RWPE1 (cell line): ENCODE measurements at regions of chr9 and their contacts with region 1.

Region 1: DNA sequence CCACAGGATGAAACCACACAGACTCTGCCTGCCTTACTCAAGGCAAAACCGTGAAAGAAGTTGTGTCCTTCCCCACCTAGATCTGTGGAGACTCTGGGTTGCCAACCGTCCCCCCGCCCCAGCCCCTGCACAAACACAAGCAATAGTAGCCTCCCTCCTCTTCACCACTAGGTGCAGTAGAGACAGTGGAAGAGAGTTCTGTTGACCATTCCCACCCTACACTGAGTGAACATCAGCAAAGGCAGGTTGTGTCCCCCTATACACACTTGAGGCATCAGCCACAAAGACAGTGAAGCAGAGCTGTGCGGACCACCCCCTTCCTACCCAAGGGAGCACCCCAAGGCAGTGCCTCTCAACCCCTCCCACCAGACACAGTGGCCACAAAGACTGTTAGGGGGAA is 223.7 kb upstream of the NFIL3 start:
- DNase-seq: no peak
- H3K27ac ChIP-seq: no peak overlapping the region
- CTCF ChIP-seq: no peak

Region 2: DNA sequence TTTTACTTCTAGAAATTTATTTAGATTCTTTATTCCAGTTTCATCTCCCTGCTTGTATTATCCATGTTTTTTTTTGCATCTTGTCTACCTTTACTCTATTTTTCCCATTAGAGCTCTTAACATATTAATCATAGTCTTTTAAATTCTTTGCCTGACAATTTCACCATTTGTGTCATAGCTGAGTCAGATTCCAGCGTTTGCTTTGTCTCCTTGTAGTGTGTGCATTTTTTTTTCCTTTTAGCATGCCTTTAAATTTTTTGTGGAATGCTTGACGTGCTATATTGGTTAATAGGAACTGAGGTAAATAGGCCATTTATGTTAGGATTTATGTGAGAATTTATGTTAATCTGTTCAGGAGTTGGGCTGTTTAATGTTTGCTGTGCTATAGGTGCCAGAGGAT is 182.0 kb before region 1 on chr9:
- CTCF ChIA-PET with region 1: no interaction called
- POLR2A ChIA-PET with region 1: no interaction called
- DNase-seq: peak; percentile 31
- H3K27ac ChIP-seq: no peak overlapping the region
- CTCF ChIP-seq: no peak

Region 3: DNA sequence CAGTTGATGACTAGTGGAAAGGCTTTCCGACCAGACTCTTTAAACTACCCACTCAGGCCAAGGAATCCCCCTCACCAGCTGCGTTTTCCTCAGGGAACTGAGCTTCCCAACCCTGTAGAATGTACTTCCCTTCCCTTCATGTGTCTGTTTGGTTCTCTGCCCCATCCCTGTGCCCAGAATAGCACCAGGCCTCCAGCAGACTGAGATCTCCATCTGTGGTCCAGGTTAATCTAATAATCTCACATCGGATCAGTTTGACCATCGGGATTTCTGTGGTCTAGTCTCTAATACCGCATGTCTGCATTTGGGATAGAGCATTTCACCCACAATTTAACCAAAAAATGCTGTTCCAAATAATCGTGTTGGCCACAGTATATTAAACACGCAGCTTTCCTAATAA is 65.4 kb after region 1 on chr9:
- CTCF ChIA-PET with region 1: no interaction called
- POLR2A ChIA-PET with region 1: interaction called, 11 read pairs
- DNase-seq: no peak
- H3K27ac ChIP-seq: no peak overlapping the region
- CTCF ChIP-seq: no peak